K562 (cell line): ENCODE measurements at regions of chr7 and their contacts with region 1.

Region 1: GRCh38 chr7:10779465-10780399 is 193.9 kb upstream of the PHF14 start:
- DNase-seq: peak; percentile 61 to 89 (median 70)
- ATAC-seq: peak; percentile 79
- H3K4me3 ChIP-seq: peak overlapping the region; percentile 50
- H3K27ac ChIP-seq: peak overlapping the region; percentile 94
- H3K4me1 ChIP-seq: peaks cover 3 to 12% of the 10 kb centered on the region in 2 experiments; a peak in 4 of 5 replicates
- H3K27me3 ChIP-seq: no peaks in the 10 kb centered on the region
- CTCF ChIP-seq: peak in 1 of 3 experiments; percentile 17; a peak in 2 of 6 replicates
- EP300 ChIP-seq: no peak
- POLR2A ChIP-seq: peak; percentile 84
- RAD21 ChIP-seq: no peak

Region 2: DNA sequence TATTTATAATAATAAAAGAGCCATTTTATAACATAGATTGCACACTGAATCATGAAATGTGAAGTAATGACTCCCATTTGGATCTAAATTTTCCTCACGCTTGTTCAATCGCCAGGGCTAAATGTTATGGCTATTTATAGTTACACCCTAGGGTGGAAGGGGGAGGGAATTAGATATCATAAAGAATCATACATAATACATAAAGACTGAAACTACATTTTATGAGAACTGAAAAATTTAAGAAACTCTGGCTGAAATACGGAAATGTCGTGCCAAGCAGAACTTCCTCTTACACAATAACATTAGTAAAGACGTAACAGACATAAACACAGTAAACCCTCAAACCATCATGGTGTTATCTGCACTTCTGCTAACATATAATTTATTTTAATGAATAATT is 133.5 kb before region 1 on chr7:
- CTCF ChIA-PET with region 1: no interaction called
- POLR2A ChIA-PET with region 1: no interaction called
- in situ Hi-C with region 1: no loop called
- intact Hi-C with region 1: loop called (anchors 10 kb)
- DNase-seq: no peak
- ATAC-seq: no peak
- H3K4me3 ChIP-seq: no peak overlapping the region
- H3K27ac ChIP-seq: no peak overlapping the region
- H3K4me1 ChIP-seq: peaks cover 0 to 8% of the 10 kb centered on the region in 2 experiments; a peak in 3 of 5 replicates
- H3K27me3 ChIP-seq: no peaks in the 10 kb centered on the region
- CTCF ChIP-seq: no peak
- EP300 ChIP-seq: no peak
- POLR2A ChIP-seq: no peak
- RAD21 ChIP-seq: no peak

Region 3: DNA sequence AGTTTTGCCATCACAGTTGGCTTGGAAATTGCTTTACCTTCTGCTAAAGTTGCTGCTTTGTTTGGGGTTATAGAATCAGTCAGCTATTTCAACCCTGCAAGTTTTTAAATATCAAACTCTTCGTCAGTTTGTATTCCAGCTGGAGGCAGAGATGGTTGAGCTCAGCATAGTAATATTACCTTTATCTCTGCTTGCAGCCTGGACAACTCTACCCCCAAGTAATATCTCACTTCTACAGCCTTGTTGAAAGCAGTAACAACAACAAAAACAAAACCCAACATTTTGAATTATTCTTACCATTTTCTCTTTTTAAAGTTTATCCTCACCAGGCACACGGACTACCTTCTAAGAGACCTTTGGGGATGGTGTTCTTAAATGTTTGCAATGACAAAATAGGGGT is 45.1 kb before region 1 on chr7:
- CTCF ChIA-PET with region 1: no interaction called
- POLR2A ChIA-PET with region 1: no interaction called
- in situ Hi-C with region 1: no loop called
- intact Hi-C with region 1: loop called (anchors 2 kb)
- DNase-seq: peak in 2 of 4 experiments; percentile 63 to 67
- ATAC-seq: peak; percentile 67
- H3K4me3 ChIP-seq: no peak overlapping the region
- H3K27ac ChIP-seq: peak overlapping the region; percentile 54
- H3K4me1 ChIP-seq: peaks cover 4 to 40% of the 10 kb centered on the region in 2 experiments; a peak in 3 of 5 replicates
- H3K27me3 ChIP-seq: no peaks in the 10 kb centered on the region
- CTCF ChIP-seq: no peak
- EP300 ChIP-seq: peak; percentile 87
- POLR2A ChIP-seq: no peak
- RAD21 ChIP-seq: no peak

Region 4: GRCh38 chr7:10767771-10768170 is 12.0 kb before region 1 on chr7:
- CTCF ChIA-PET with region 1: no interaction called
- POLR2A ChIA-PET with region 1: no interaction called
- in situ Hi-C with region 1: no loop called
- intact Hi-C with region 1: no loop called
- DNase-seq: peak in 1 of 4 experiments; percentile 16
- ATAC-seq: no peak
- H3K4me3 ChIP-seq: no peak overlapping the region
- H3K27ac ChIP-seq: no peak overlapping the region
- H3K4me1 ChIP-seq: 0 out of 5 replicates have a peak, but pooled peaks cover 0 to 3% of the 10 kb centered on the region in 2 experiments
- H3K27me3 ChIP-seq: no peaks in the 10 kb centered on the region
- CTCF ChIP-seq: no peak
- EP300 ChIP-seq: no peak
- POLR2A ChIP-seq: no peak
- RAD21 ChIP-seq: no peak